AG04449 (cell line): ENCODE measurements at regions of chr12 and their contacts with region 1.

Region 1: DNA sequence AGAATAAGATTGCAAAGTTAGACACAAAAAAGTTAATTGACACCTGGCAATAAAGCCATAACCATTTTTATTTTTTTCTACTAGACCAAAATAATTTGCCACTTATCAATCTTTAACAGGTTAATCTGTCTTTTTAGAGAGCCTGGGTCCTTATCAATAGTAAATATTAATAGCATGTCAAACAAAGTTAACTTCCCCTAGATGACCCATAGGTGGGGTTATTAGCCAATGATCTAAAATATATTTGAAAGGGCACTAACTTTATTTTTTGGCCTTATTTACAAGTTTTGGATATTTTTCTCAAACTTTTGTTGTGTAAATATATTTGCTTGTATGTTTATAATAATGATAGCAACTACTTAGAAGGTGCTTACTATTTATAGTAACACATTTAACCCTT is 3.9 kb downstream of the ANKRD33 start:
- DNase-seq: no peak
- H3K4me3 ChIP-seq: no peak overlapping the region
- CTCF ChIP-seq: peak; percentile 16

Region 2: GRCh38 chr12:51871126-51871525 is 20.7 kb before region 1 on chr12:
- CTCF ChIA-PET with region 1: interaction called, 54 read pairs
- POLR2A ChIA-PET with region 1: no interaction called
- DNase-seq: no peak
- H3K4me3 ChIP-seq: no peak overlapping the region
- CTCF ChIP-seq: no peak

Region 3: DNA sequence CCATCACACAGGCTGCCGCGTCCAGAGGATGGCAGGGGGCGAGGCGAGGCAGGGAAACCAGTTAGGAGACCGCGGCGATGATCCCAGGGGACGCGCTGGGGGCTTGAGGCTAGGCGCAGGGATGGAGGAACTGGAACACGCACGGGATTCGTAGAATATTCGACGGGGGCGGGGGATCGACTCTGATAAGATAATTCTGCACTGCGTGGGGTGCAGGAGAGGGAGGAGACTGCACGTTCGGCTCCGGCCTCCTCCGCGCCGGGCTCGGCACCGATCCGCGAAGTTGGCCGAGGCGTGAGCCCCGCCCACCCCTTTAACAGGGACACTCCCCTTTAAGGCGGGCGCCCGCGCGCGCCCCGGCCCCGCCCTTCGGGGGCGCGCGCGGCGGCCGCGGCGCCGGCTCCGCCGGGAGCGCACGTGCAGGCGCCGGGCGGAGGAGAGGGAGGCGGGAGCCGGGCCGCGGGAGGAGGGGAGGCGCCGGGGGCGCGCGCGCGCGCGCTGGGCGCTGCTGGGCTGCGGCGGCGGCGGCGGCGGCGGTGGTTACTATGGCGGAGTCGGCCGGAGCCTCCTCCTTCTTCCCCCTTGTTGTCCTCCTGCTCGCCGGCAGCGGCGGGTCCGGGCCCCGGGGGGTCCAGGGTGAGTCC is 59.5 kb after region 1 on chr12 and contains the start of gene ACVR1B:
- CTCF ChIA-PET with region 1: interaction called, 13 read pairs
- POLR2A ChIA-PET with region 1: no interaction called
- DNase-seq: no peak
- H3K4me3 ChIP-seq: peak within 1 kb of the TSS; percentile 83
- CTCF ChIP-seq: no peak

Region 4: GRCh38 chr12:51980051-51980808 is 88.4 kb after region 1 on chr12:
- CTCF ChIA-PET with region 1: interaction called, 146 read pairs
- POLR2A ChIA-PET with region 1: no interaction called
- DNase-seq: no peak
- H3K4me3 ChIP-seq: no peak overlapping the region
- CTCF ChIP-seq: peak; percentile 91

Region 5: GRCh38 chr12:51994959-51995358 is 103.1 kb after region 1 on chr12:
- CTCF ChIA-PET with region 1: interaction called, 25 read pairs
- POLR2A ChIA-PET with region 1: no interaction called
- DNase-seq: no peak
- H3K4me3 ChIP-seq: no peak overlapping the region
- CTCF ChIP-seq: no peak

Region 6: GRCh38 chr12:52121824-52122539 is 230.1 kb after region 1 on chr12:
- CTCF ChIA-PET with region 1: no interaction called
- POLR2A ChIA-PET with region 1: no interaction called
- DNase-seq: no peak
- H3K4me3 ChIP-seq: no peak overlapping the region
- CTCF ChIP-seq: peak; percentile 84